Gastrocnemius medialis (tissue), 4 donors: ENCODE measurements at regions of chr12 and their contacts with region 1.

Region 1: GRCh38 chr12:92987362-92987761 is 58.3 kb upstream of the EEA1 start:
- DNase-seq: peak in 1 of 2 donors; percentile 6
- ATAC-seq: peak; percentile 87 to 90
- H3K4me3 ChIP-seq: peak overlapping the region in 2 of 4 donors; percentile 4 to 14
- H3K27ac ChIP-seq: peak overlapping the region; percentile 59 to 78 (median 66)
- H3K4me1 ChIP-seq: peaks cover 8 to 11% of the 10 kb centered on the region in 2 donors
- H3K27me3 ChIP-seq: no peaks in the 10 kb centered on the region
- CTCF ChIP-seq: peak; percentile 49 to 60 (median 52)
- POLR2A ChIP-seq: no peak

Region 2: GRCh38 chr12:92784795-92785562 is 202.4 kb before region 1 on chr12:
- in situ Hi-C with region 1: no loop called
- intact Hi-C with region 1: loop called (anchors 5 kb)
- DNase-seq: peak in 1 of 2 donors; percentile 8
- ATAC-seq: peak; percentile 95 to 98
- H3K4me3 ChIP-seq: no peak overlapping the region
- H3K27ac ChIP-seq: peak overlapping the region; percentile 25 to 51 (median 32)
- H3K4me1 ChIP-seq: peaks cover 20 to 29% of the 10 kb centered on the region in 2 donors
- H3K27me3 ChIP-seq: no peaks in the 10 kb centered on the region
- CTCF ChIP-seq: peak; percentile 43 to 69 (median 67)
- POLR2A ChIP-seq: no peak

Region 3: GRCh38 chr12:93311827-93312226 is 324.5 kb after region 1 on chr12:
- in situ Hi-C with region 1: no loop called
- intact Hi-C with region 1: no loop called
- DNase-seq: no peak
- ATAC-seq: no peak
- H3K4me3 ChIP-seq: no peak overlapping the region
- H3K27ac ChIP-seq: no peak overlapping the region
- H3K4me1 ChIP-seq: no peaks in the 10 kb centered on the region
- H3K27me3 ChIP-seq: no peaks in the 10 kb centered on the region
- CTCF ChIP-seq: no peak
- POLR2A ChIP-seq: no peak

Region 4: GRCh38 chr12:93390549-93391297 is 403.4 kb after region 1 on chr12:
- in situ Hi-C with region 1: loop called in 3 of 4 experiments (anchors 5 to 10 kb)
- intact Hi-C with region 1: no loop called
- DNase-seq: no peak
- ATAC-seq: no peak
- H3K4me3 ChIP-seq: no peak overlapping the region
- H3K27ac ChIP-seq: peak overlapping the region in 3 of 4 donors; percentile 35 to 51 (median 43)
- H3K4me1 ChIP-seq: peaks cover 11 to 25% of the 10 kb centered on the region in 2 donors
- H3K27me3 ChIP-seq: no peaks in the 10 kb centered on the region
- CTCF ChIP-seq: no peak
- POLR2A ChIP-seq: no peak

Region 5: DNA sequence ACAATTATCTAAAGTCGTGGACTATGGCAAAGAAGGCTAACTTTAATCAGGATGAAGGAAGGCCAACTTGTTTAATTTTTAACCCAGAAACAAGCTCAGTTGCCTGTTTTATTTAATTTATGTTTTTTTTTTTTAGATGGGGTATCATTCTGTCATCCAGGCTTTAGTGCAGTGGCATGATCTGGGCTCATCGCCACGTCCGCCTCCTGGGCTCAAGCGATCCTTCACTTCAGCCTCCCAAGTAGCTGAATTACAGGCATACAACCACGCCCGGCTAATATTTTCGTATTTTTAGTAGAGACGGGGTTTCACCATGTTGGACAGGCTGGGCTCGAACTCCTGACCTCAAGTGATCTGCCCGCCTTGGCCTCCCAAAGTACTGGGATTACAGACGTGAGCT is 410.1 kb after region 1 on chr12:
- in situ Hi-C with region 1: loop called in 3 of 4 experiments (anchors 5 to 10 kb)
- intact Hi-C with region 1: loop called (anchors 1 kb)
- DNase-seq: no peak
- ATAC-seq: no peak
- H3K4me3 ChIP-seq: no peak overlapping the region
- H3K27ac ChIP-seq: peak overlapping the region; percentile 4 to 54 (median 34)
- H3K4me1 ChIP-seq: peaks cover 6 to 8% of the 10 kb centered on the region in 2 donors
- H3K27me3 ChIP-seq: no peaks in the 10 kb centered on the region
- CTCF ChIP-seq: no peak
- POLR2A ChIP-seq: no peak

Region 6: DNA sequence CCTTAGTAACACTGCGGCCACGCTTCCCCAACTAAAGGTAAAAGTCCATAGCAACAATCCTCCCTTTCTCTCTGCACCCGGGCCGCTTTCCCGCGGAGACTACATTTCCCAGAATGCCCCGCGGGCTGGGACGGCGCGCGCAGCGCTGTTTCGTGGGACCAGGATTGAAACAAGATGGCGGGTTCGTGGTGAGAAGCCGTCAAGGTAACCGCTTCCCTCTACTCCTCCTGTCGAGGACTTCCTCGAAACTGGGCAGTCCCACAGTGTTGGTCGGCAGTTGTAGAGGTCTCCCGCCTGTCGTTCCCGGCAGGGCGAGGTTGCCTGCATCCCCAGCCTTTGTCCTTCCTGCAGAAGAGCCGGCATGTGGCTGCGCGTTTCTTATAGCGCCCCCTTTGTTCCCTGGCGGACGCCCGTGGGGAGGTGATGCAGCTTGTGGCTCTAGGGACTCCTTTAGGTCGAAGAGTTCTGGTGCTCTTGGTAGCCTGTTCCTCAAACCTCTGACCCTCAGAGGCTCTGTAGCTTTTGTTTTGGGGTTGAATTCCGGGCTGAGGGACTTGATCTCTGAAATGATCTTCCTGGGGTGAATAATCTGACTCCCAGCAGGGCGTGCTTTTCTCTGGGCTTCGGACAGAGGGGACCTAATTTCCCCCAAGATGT is 480.1 kb after region 1 on chr12 and contains the start of gene MRPL42:
- in situ Hi-C with region 1: no loop called
- intact Hi-C with region 1: loop called (anchors 5 kb)
- DNase-seq: peak; percentile 61 to 85
- ATAC-seq: peak; percentile 96 to 98
- H3K4me3 ChIP-seq: peak within 1 kb of the TSS; percentile 72 to 93 (median 88)
- H3K27ac ChIP-seq: peak within 1 kb of the TSS; percentile 89 to 95 (median 95)
- H3K4me1 ChIP-seq: peaks cover 13 to 14% of the 10 kb centered on the region in 2 donors
- H3K27me3 ChIP-seq: no peaks in the 10 kb centered on the region
- CTCF ChIP-seq: peak; percentile 54 to 85 (median 68)
- POLR2A ChIP-seq: peak; percentile 50 to 67
- total RNA-seq, gene MRPL42: 14.0 to 44.6 (median 34.8) TPM